ENCODE measurements at regions of chr19 and their contacts with region 1.

Region 1: DNA sequence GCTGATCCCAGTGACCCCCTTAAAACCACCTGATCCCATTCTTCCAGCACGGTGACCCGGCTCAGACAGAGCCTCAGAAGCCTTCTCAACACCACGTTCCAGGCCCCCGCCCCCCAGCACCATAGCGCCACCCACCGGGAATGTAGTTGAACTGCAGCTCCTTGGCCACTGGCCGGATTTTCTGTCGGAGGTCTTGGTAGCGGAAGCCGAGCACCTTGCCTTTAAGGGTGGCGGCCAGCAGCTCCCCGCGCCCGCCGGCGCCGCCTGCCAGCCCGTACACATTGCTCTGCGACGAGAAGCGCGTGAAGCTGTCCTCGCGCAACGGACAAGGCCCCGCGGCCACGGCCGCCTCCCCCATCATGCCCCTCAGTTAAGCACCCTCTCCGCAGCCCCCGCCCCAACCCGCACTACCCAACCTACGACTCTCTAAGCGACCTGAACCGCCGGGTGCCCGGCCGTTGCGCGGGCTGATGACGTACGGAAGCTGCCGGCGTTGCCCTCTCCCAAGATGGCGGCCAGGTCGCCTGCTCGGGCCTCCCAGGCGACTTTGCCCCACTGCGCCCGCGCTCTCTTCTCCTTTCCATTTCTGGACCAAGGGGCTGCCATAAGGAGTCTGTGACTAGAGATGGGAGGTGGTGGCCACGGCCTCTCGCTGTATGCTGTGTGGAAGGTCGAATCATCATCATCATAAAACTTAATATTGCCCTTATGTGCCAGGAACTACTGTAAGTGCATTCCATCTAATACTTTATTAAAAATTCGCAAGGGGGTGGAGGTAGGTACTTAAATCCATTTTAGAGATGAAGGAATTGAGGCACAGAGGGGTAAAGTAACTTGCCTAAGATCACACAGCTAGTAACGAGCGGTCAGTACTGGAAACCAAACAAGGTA is at the start of gene KPTN:
- DNase-seq: peak; percentile 33
- H3K4me3 ChIP-seq: peak within 1 kb of the TSS; percentile 90
- H3K27me3 ChIP-seq: no peaks in the 10 kb centered on the region
- CTCF ChIP-seq: peak; percentile 98
- polyA plus RNA-seq, gene KPTN: 7.0 and 12.1 TPM in 2 replicates

Region 2: GRCh38 chr19:47256688-47257443 is 227.2 kb before region 1 on chr19:
- CTCF ChIA-PET with region 1: no interaction called
- POLR2A ChIA-PET with region 1: no interaction called
- DNase-seq: peak; percentile 87
- H3K4me3 ChIP-seq: peak overlapping the region; percentile 63
- H3K27me3 ChIP-seq: no peaks in the 10 kb centered on the region
- CTCF ChIP-seq: no peak

Region 3: DNA sequence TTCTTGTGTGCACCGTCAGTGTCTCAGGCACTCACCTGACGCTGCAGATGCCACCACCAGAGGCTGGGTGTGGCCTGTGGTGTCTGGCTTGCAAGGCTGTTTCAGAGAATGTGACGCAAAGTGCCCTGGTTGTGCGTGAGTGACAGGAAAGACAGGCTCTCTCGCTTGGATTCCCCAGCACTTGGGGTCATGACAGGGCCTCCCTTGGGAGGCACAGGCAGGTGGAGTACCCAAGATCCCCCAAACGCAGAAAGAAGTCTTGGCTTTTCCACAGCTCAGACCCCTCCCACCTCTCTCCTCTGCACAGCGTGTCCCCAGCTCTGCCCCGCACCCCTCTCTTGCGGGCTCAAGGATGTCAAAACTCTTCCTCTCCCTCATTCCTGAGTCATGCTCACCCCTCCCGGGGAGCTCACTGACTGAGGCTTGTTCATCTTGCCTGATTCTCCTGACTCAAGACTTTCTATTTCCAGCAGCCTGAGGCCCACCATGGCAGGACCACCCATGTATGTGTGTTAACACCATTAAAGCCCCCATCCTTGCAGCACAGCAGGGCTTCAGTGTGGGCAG is 113.9 kb before region 1 on chr19:
- CTCF ChIA-PET with region 1: no interaction called
- POLR2A ChIA-PET with region 1: no interaction called
- DNase-seq: no peak
- H3K4me3 ChIP-seq: no peak overlapping the region
- H3K27me3 ChIP-seq: no peaks in the 10 kb centered on the region
- CTCF ChIP-seq: no peak

Region 4: GRCh38 chr19:47428177-47428894 is 55.7 kb before region 1 on chr19:
- CTCF ChIA-PET with region 1: interaction called, 11 read pairs
- POLR2A ChIA-PET with region 1: no interaction called
- DNase-seq: peak; percentile 97
- H3K4me3 ChIP-seq: peak overlapping the region; percentile 24; the same call in 1 of the 2 replicates
- H3K27me3 ChIP-seq: peaks cover 9% of the 10 kb centered on the region
- CTCF ChIP-seq: no peak

Region 5: GRCh38 chr19:47436712-47437401 is 47.2 kb before region 1 on chr19:
- CTCF ChIA-PET with region 1: interaction called, 15 read pairs
- POLR2A ChIA-PET with region 1: no interaction called
- DNase-seq: no peak
- H3K4me3 ChIP-seq: no peak overlapping the region
- H3K27me3 ChIP-seq: peaks cover 2% of the 10 kb centered on the region; the same call in 1 of the 2 replicates
- CTCF ChIP-seq: peak; percentile 90

Region 6: DNA sequence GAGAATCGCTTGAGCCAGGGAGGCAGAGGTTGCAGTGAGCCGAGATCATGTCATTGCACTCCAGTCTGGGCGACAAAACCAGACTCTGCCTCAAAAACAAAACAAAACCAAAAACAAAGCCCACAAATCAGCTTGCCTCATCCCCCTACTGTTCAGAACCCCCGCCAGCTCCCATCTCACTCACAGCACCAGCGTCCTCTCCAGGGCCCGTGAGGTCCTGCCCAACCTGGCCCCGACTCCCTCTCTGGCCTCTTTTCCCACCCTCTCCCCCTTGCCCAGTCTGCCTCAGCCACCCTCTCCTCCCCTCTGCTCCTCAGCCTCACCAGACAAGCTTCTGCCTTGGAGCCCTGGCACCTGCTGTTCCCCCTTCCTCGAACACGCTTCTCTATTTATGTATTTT is 16.1 kb before region 1 on chr19:
- CTCF ChIA-PET with region 1: interaction called, 14 read pairs
- POLR2A ChIA-PET with region 1: no interaction called
- DNase-seq: no peak
- H3K4me3 ChIP-seq: no peak overlapping the region
- H3K27me3 ChIP-seq: peaks cover 29% of the 10 kb centered on the region
- CTCF ChIP-seq: no peak

Region 7: GRCh38 chr19:47494729-47495128 is 10.7 kb after region 1 on chr19:
- CTCF ChIA-PET with region 1: interaction called, 48 read pairs
- POLR2A ChIA-PET with region 1: no interaction called
- DNase-seq: no peak
- H3K4me3 ChIP-seq: no peak overlapping the region
- H3K27me3 ChIP-seq: no peaks in the 10 kb centered on the region
- CTCF ChIP-seq: no peak

Region 8: DNA sequence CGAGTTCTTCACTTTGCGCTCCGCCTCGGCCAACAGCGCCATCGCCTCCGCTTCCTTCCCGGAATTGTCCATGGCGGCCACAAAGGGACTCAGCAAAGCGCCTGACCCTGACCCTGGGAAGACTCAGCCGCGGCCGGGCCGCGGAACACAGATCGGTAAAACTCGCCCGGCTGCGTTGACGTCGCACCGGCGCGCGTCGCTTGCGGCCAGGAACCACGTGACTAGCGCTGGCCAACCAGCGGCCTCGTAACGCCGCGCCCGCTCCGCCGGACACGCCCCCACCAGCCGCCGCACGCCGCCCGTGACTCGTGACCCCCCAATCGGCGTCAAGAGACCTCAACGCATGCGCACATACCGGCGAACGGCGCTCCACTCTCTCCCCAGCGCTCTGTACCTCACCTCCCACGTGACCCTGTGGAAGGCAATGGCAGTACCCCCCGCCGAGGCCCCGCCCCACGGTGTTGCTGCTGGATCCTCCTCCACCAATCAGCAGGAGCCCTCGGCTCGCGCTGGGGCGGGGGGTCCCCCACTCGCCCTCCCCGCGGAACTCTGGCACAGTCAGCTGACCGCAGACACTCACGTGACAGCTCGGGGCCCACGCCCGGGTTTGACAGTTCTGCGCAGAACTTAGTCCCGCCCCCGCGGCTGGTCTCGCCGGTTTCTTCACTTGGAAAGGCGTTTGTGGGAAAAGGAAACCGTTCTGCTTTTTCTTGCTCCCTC is 31.0 kb after region 1 on chr19 and contains the start of gene NAPA:
- CTCF ChIA-PET with region 1: interaction called, 25 read pairs
- POLR2A ChIA-PET with region 1: no interaction called
- DNase-seq: peak; percentile 99
- H3K4me3 ChIP-seq: peak within 1 kb of the TSS; percentile 78
- H3K27me3 ChIP-seq: 0 out of 2 replicates have a peak, but pooled peaks cover 1% of the 10 kb centered on the region
- CTCF ChIP-seq: no peak
- polyA plus RNA-seq, gene NAPA: 100 and 203 TPM in 2 replicates

Measured in BJ (cell line).